ENCODE measurements at regions of chr1 and their contacts with region 1.

Region 1: GRCh38 chr1:2840036-2840809 is 38.7 kb upstream of the TTC34 start:
- DNase-seq: peak in 8 of 9 donors; percentile 43 to 87 (median 82)
- ATAC-seq: peak; percentile 89
- H3K4me3 ChIP-seq: peak overlapping the region; percentile 31
- H3K4me3 Mint-ChIP-seq: peak overlapping the region; percentile 49 to 88 (median 78)
- H3K27ac ChIP-seq: peak overlapping the region; percentile 60
- H3K27ac Mint-ChIP-seq: peak overlapping the region; percentile 40 to 92 (median 90)
- H3K4me1 ChIP-seq: peaks cover 10 to 17% of the 10 kb centered on the region in 2 donors
- H3K4me1 Mint-ChIP-seq: peaks cover 11 to 24% (median 23%) of the 10 kb centered on the region in 7 donors
- H3K27me3 ChIP-seq: no peaks in the 10 kb centered on the region
- H3K27me3 Mint-ChIP-seq: peaks cover 0 to 4% (median 0%) of the 10 kb centered on the region in 5 donors

Region 2: DNA sequence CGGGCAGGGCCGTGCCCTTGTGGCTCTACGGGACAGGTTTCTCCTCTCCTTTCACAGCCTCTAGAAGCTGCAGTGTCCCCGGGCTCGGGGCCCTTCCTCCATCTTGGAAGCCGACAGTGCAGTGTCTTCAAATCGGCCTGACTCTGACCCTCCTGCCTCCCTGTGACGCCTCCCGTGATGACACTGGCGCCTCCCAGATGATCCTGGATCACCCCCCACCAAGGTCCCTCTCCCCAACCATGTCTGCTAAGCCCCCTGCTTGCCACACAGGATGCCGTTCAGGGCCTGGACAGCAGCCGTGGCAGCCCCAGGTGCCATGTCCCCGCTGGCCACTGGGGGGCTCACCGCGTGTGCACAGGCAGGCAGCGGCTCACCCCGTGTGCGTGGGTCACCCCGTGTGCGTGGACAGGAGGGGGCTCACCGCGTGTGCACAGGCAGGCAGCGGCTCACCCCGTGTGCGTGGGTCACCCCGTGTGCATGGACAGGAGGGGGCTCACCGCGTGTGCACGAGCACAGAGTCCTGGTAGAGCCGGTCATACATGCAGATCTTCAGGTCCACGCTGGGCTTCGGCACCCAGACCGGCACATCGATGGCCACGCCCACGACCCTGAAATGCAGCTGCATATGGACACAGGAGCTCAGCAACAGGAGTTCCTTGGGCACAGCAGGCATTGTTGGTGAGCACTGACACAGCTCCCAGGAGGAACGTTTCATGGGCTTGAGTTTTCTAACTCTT is 896.2 kb before region 1 on chr1:
- CTCF ChIA-PET with region 1: no interaction called
- POLR2A ChIA-PET with region 1: no interaction called
- intact Hi-C with region 1: loop called in 1 of 2 experiments (anchors 2 kb)
- DNase-seq: peak in 8 of 9 donors; percentile 42 to 65 (median 49)
- ATAC-seq: peak; percentile 91
- H3K4me3 ChIP-seq: no peak overlapping the region
- H3K4me3 Mint-ChIP-seq: peak overlapping the region in 4 of 10 donors; percentile 6 to 65 (median 38)
- H3K27ac ChIP-seq: no peak overlapping the region
- H3K27ac Mint-ChIP-seq: no peak overlapping the region
- H3K4me1 ChIP-seq: peaks cover 3 to 6% of the 10 kb centered on the region in 2 donors
- H3K4me1 Mint-ChIP-seq: peaks cover 0 to 7% (median 3%) of the 10 kb centered on the region in 7 donors
- H3K27me3 ChIP-seq: no peaks in the 10 kb centered on the region
- H3K27me3 Mint-ChIP-seq: no peaks in the 10 kb centered on the region

Region 3: GRCh38 chr1:2556277-2556677 is 283.9 kb before region 1 on chr1 and contains the start of gene TNFRSF14:
- CTCF ChIA-PET with region 1: no interaction called
- POLR2A ChIA-PET with region 1: no interaction called
- intact Hi-C with region 1: loop called in 1 of 2 experiments (anchors 1 kb)
- DNase-seq: peak; percentile 47 to 82 (median 75)
- ATAC-seq: peak; percentile 76
- H3K4me3 ChIP-seq: peak within 1 kb of the TSS; percentile 83
- H3K4me3 Mint-ChIP-seq: peak within 1 kb of the TSS; percentile 89 to 100 (median 99)
- H3K27ac ChIP-seq: peak within 1 kb of the TSS; percentile 93
- H3K27ac Mint-ChIP-seq: peak within 1 kb of the TSS; percentile 89 to 99 (median 99)
- H3K4me1 ChIP-seq: peaks cover 25 to 28% of the 10 kb centered on the region in 2 donors
- H3K4me1 Mint-ChIP-seq: peaks cover 12 to 42% (median 36%) of the 10 kb centered on the region in 7 donors
- H3K27me3 ChIP-seq: no peaks in the 10 kb centered on the region
- H3K27me3 Mint-ChIP-seq: no peaks in the 10 kb centered on the region
- total RNA-seq, gene TNFRSF14: 182 to 253 (median 204) TPM

Region 4: DNA sequence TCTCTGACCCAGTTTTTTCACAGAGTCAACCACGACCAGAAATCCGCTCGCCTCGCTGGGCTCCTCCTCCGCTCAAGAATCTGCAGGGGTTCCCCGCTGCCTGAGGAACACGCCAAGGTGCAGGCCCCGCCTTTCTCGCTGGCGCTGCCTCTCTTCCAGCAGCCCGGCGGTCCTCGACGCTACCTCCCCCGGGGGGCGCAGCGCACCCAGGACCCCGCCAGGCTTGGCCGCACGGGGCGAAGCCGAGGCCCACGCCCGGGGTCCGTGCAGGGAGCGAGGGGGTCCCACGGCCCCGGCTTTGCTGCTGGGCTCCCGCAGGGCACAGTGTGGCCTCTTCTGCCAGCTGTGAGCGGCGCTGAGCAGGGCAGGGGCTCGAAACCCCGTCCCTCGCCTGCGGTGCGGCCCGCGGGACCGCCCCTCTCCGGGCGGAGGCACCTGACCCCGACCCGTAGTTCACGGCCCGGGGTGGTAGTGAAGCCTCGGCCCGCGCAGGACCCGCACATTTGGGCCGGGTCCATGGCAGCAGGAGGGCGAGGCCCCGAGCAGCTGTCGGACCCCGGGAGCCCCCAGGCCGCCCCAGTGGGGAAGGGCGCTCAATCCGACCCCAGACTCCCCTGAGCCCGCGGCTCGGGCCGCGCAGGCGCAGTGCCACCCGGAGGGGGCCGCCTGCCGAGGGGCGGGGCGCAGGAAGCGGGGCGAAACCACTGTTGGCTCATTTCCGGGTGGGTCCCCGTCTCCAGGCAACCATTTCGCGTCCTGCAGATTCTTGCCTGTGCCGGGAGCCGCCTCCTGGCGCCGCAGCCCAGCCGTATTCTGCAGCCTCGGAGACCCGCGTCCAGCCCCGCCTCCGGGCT is 197.4 kb before region 1 on chr1:
- CTCF ChIA-PET with region 1: no interaction called
- POLR2A ChIA-PET with region 1: no interaction called
- intact Hi-C with region 1: loop called in 1 of 2 experiments (anchors 1 kb)
- DNase-seq: peak; percentile 92 to 97 (median 96)
- ATAC-seq: peak; percentile 89
- H3K4me3 ChIP-seq: peak overlapping the region; percentile 87
- H3K4me3 Mint-ChIP-seq: peak overlapping the region; percentile 85 to 96 (median 88)
- H3K27ac ChIP-seq: peak overlapping the region; percentile 97
- H3K27ac Mint-ChIP-seq: peak overlapping the region in 8 of 9 donors; percentile 76 to 93 (median 86)
- H3K4me1 ChIP-seq: peaks cover 9% of the 10 kb centered on the region in 2 donors
- H3K4me1 Mint-ChIP-seq: peaks cover 6 to 19% (median 15%) of the 10 kb centered on the region in 7 donors
- H3K27me3 ChIP-seq: no peaks in the 10 kb centered on the region
- H3K27me3 Mint-ChIP-seq: peaks cover 0 to 3% (median 0%) of the 10 kb centered on the region in 5 donors

Region 5: DNA sequence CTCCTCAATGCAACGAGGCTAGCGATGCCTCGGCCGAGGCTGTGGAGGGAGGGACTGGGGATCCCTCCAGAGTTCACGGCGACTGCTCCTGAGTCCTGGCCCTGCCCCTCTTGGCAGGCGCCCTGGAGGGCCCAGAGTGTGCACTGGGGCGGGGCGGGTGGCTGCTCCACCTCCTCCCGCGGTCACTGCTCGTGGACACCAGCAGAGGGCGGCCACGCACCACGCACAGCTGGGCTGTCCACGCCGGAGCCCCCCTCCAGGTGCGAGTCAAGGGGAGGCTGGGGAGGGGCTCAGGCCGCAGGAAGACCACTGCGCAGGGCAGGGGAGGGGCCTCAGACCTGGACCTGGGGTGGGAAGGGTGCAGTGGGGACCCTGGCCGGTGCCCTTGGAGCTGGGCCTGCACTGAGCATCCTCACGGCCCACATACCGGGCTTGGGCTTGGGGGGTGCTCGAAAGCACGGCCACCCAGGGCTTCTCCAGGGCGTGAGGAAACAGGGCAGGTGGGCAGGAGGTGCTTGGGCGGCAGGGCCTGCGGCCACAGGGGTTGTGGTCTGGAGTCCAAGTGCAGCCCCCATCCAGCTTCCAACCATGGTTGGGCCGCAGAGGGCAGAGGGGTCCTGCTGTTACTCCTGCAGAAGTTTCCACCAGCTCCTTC is 18.1 kb before region 1 on chr1:
- CTCF ChIA-PET with region 1: interaction called, 11 read pairs
- POLR2A ChIA-PET with region 1: interaction called, 13 read pairs
- intact Hi-C with region 1: loop called in 1 of 2 experiments (anchors 1 kb)
- DNase-seq: peak; percentile 22 to 66 (median 53)
- ATAC-seq: peak; percentile 79
- H3K4me3 ChIP-seq: no peak overlapping the region
- H3K4me3 Mint-ChIP-seq: peak overlapping the region in 1 of 10 donors; percentile 37
- H3K27ac ChIP-seq: no peak overlapping the region
- H3K27ac Mint-ChIP-seq: no peak overlapping the region
- H3K4me1 ChIP-seq: peaks cover 0 to 12% of the 10 kb centered on the region in 2 donors
- H3K4me1 Mint-ChIP-seq: peaks cover 0 to 6% (median 4%) of the 10 kb centered on the region in 7 donors
- H3K27me3 ChIP-seq: no peaks in the 10 kb centered on the region
- H3K27me3 Mint-ChIP-seq: peaks cover 0 to 5% (median 0%) of the 10 kb centered on the region in 5 donors

Region 6: DNA sequence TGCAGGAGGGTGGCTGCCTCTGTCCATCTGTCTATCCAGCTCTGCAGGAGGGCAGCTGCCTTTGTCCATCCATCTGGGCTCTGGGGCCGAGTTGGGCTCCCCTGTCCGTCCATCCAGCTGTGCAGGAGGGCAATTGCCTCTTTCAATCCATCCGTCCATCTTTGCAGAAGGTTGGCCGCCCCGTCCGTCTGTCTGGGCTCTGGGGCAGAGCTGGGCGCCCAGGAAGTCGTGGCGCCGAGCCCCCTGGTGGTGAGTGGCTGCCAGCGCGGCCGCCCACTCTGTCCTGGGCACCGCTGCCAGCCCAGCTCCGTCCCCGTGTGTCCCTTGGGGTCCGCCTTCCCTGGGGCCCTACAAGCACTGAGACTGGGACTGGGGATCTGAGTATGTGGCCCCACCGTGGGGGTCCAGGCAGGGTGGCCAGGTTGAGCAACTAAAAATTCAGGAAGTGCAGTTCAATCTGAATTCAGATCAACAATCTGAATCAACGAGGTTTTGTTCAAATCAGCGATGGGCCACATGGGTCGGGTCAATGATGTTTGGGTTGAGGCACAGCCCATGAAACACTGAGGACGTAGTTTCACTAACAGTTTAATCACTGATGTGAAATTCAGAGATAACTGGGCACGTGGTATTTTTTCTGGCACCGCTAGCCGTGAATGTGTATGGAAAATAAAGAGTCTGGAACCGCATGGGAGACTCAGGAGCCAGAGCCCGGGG is 81.9 kb after region 1 on chr1:
- CTCF ChIA-PET with region 1: no interaction called
- POLR2A ChIA-PET with region 1: no interaction called
- intact Hi-C with region 1: no loop called
- DNase-seq: peak in 8 of 9 donors; percentile 15 to 53 (median 27)
- ATAC-seq: peak; percentile 42
- H3K4me3 ChIP-seq: no peak overlapping the region
- H3K4me3 Mint-ChIP-seq: no peak overlapping the region
- H3K27ac ChIP-seq: no peak overlapping the region
- H3K27ac Mint-ChIP-seq: peak overlapping the region in 2 of 9 donors; percentile 10 to 38
- H3K4me1 ChIP-seq: no peaks in the 10 kb centered on the region
- H3K4me1 Mint-ChIP-seq: peaks cover 0 to 3% (median 0%) of the 10 kb centered on the region in 7 donors
- H3K27me3 ChIP-seq: no peaks in the 10 kb centered on the region
- H3K27me3 Mint-ChIP-seq: peaks cover 0 to 3% (median 0%) of the 10 kb centered on the region in 5 donors

Measured in naive thymus-derived CD4-positive, alpha-beta T cell (primary cell).